Stomach (tissue), 19 donors: ENCODE measurements at regions of chr11 and their contacts with region 1.

Region 1: GRCh38 chr11:122781378-122782195 is 56.7 kb upstream of the CRTAM start:
- DNase-seq: peak; percentile 84 to 95
- H3K4me3 ChIP-seq: no peak overlapping the region
- H3K27ac ChIP-seq: no peak overlapping the region
- H3K4me1 ChIP-seq: peaks cover 0 to 21% (median 12%) of the 10 kb centered on the region in 4 donors
- H3K27me3 ChIP-seq: peaks cover 0 to 4% (median 0%) of the 10 kb centered on the region in 3 donors
- CTCF ChIP-seq: peak in 5 of 7 experiments; percentile 83 to 94 (median 92)
- EP300 ChIP-seq: no peak
- POLR2A ChIP-seq: no peak

Region 2: GRCh38 chr11:122628810-122629555 is 152.6 kb before region 1 on chr11:
- intact Hi-C with region 1: loop called (anchors 5 kb)
- DNase-seq: peak; percentile 58 to 79
- H3K4me3 ChIP-seq: no peak overlapping the region
- H3K27ac ChIP-seq: no peak overlapping the region
- H3K4me1 ChIP-seq: peaks cover 0 to 9% (median 0%) of the 10 kb centered on the region in 4 donors
- H3K27me3 ChIP-seq: peaks cover 0 to 17% (median 0%) of the 10 kb centered on the region in 3 donors
- CTCF ChIP-seq: peak in 5 of 7 experiments; percentile 66 to 82 (median 72)
- EP300 ChIP-seq: no peak
- POLR2A ChIP-seq: no peak

Region 3: DNA sequence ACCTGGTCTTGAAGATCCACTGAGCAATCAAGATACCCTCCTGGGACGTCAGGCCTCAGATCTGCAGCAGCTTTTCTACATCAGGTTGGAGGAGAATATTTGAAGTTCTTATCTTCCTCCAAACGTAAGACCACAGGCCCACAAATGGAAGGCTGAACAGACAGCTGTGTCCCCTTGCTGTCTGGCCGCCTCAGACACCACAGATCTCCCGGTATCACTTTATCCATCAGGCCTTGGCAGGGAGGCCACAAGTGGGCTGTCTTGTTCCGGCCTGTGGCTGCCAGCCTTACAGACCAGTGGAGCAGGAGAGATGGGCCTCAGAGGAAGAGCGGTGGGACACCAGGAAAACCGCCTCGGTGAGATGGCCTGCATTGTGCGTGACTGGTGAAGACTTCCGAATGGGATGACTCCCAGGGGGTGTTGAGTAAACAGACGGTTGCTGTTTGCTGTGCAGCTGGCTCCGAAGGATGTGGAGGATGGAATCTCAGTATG is 110.1 kb before region 1 on chr11:
- intact Hi-C with region 1: no loop called
- DNase-seq: peak in 1 of 2 donors; percentile 46
- H3K4me3 ChIP-seq: no peak overlapping the region
- H3K27ac ChIP-seq: no peak overlapping the region
- H3K4me1 ChIP-seq: peaks cover 0 to 20% (median 4%) of the 10 kb centered on the region in 4 donors
- H3K27me3 ChIP-seq: no peaks in the 10 kb centered on the region
- CTCF ChIP-seq: no peak
- EP300 ChIP-seq: no peak
- POLR2A ChIP-seq: no peak

Region 4: GRCh38 chr11:122843281-122844141 is 61.9 kb after region 1 on chr11:
- intact Hi-C with region 1: no loop called
- DNase-seq: peak in 1 of 2 donors; percentile 67
- H3K4me3 ChIP-seq: no peak overlapping the region
- H3K27ac ChIP-seq: peak overlapping the region in 1 of 5 donors; percentile 38
- H3K4me1 ChIP-seq: no peaks in the 10 kb centered on the region
- H3K27me3 ChIP-seq: peaks cover 0 to 4% (median 0%) of the 10 kb centered on the region in 3 donors
- CTCF ChIP-seq: no peak
- EP300 ChIP-seq: no peak
- POLR2A ChIP-seq: no peak